ENCODE measurements at regions of chr17 and their contacts with region 1.

Region 1: DNA sequence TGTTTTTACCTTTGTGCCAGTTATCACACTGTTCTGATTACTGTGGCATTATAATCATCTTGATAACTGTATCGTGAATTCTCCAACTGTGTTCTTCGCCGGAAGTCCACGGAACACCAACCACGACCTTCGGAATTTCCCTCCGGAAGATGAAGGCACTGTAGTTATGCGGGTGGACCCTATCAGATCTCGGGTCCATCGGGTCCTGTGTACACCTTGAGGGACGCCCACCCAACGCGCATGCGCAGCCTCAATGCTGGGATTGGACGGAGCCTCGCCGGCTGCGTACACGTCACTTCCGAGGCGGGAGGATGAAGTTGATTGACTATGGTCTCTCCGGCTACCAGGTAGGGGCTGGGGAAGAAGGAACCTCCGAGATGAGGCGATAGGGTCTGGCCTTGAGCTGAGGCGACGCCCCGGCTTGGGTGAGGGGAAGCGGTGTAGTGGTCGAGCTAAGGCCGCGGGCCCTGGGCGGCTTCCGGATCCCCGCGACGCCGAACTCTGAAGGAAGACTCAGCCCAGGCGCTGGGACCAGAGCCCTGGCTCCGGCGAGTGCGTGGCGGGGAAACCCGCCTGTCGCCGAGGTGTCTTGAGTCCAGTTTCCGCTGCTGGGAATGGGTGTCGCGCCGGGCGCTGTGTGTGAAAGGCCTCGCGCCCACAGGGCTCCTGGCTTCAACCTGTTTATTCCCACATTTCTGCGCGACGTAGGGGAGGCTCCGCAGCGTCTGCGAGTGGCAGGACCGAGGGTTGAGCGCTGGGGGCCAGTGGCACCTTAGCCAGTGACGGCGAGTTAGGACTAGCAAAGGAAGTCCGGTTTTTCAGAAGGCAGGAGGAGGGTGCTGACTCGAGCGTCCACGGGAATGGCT is at the start of gene DHRS7B:
- DNase-seq: peak; percentile 98
- total RNA-seq, gene DHRS7B: 37.4 TPM

Region 2: DNA sequence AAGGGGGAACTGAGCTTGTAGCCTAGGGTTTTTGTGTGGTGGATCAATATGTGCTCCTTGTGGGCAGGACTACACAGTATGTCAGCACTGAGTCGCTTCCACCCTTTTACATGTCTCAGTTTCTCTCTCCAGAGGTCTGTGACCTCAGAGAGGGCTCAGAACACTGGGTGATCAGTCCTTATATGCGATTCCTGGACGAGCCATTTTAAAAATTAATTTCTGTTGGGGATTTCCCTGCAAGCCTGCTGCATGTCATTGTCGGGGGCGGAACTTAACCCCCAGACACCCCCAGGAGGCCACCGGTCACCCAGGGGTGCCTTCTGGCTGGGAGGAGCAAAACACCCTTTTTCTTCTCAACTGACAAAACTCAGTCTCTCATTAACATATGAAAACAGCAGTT is 14.0 kb after region 1 on chr17:
- intact Hi-C with region 1: no loop called
- DNase-seq: no peak

Region 3: DNA sequence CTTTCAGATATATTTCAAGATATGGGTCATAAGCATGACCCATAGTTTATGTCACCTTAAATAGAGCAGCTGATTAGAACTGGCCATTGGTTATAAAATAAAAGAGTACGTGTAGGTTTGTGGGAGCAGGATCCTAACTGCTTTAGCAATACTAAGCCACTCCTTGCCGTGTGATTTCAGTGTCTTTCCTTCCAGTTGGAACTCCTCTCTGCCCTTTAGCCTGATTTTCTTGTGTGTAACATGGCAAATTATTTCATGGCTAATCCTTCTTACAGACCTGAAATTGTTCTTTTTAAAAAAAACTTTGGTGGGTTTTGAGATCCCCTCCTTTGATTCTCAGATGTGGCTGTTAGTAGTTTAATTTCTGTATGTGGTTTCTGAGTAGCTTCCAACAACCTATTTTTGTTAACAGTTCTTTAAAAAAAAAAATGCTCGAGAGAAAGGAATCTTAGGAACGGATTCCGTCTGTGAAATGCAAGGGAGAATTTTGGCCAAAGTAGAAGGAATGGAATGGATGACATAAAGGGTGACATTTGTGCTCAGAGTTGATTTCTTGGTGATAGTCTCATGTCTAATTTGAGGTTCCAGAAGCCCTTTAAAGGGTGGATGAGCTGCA is 39.8 kb after region 1 on chr17:
- intact Hi-C with region 1: loop called (anchors 5 kb)
- DNase-seq: no peak

Region 4: GRCh38 chr17:21214015-21214776 is 87.3 kb after region 1 on chr17 and contains the start of gene TMEM11:
- intact Hi-C with region 1: loop called (anchors 2 kb)
- DNase-seq: peak; percentile 98
- total RNA-seq, gene TMEM11: 32.0 TPM

Region 5: DNA sequence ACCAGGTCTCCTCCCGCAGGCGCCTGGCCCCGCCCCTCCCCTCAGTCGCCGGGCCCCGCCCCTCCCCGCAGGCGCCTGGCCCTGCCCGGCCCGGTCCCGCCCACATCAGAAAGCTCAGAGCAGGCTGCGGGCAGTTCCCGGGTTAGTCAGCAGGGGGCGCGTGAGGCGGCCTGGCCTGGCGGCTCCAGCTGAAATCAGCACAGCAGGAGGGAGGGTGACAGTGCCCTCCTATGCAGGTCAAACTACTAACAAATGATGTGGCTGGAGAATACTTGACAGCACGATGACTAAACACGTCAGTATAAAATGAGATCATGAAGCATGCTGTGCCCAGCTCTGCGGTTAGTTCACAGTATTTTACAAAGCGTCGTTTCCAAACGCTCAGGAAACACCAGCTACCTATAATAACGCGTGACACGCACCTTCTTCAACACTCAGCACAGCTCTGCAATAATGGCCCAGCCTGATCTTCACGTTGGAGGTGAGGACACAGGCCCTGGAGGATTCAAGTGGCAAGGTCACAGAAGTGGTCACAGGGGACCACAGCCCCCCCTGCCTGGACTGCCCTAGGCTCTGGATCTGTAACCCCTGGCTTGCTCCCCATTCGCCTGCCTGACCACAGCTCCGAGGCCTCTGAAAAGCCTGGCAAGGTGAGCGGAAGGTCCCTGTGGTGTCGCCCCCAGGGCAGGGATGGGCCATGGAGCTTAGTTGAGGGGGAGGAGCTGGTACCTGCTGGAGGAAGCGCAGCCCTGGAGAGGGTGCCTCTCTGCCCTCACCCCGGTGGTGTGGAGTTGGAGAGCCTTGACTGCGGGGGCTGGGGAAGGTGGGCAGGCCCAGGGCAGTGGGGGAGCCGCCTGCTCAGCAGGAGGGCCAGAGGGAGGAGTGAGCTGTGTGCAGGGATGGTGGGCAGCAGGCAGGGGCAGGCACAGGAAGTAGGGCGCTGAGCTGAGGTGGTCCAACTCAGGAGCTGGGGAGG is 330.5 kb after region 1 on chr17:
- intact Hi-C with region 1: loop called (anchors 5 kb)
- DNase-seq: peak; percentile 96

Region 6: GRCh38 chr17:21511363-21512198 is 384.7 kb after region 1 on chr17:
- intact Hi-C with region 1: loop called (anchors 5 kb)
- DNase-seq: peak; percentile 92

Measured in cardiac septum (tissue), 1 donor.